Activated CD4-positive, alpha-beta T cell treated with anti-CD3 and anti-CD28 coated beads, Interleukin-2, amount 10 ng/mL, durations not matched to agents 7 days and 5 days (primary cell): ENCODE measurements at regions of chr11 and their contacts with region 1.

Region 1: DNA sequence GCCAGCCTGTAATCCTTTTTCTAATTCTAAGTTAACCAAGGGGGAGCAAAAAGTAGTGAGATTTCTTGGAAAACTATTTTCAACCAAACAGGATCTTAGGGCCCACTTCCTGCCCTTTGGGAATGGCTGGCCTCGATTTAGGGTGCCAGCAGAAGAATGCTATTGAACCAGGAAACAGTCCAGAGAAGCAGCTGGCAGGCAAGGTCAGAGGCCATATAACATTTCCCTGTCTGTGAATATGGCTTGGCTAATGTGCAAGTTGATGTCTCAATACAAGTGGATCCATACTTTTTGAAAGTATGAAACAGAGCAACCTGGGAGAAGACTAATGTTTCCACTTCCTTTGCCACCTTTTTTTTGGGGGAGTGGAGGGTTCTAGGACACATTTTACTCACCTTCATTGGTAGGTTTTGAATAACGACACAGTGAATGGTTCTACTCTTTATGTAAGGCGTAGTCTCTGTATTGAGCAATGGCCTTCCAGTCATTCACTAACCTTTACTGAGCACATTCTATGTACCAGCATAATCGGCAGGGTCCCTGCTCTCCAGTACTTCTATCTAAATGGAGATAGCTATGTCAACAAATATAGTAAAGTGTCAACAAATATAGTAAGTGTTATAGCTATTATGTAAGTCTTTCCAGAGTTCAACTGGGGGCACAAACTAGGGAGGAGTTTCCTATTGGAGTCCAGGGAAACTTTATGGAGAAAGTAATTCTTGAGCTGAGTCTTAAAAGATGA is 34.2 kb upstream of the RRM1 start:
- DNase-seq: no peak
- H3K4me3 Mint-ChIP-seq: no peak overlapping the region
- H3K27ac Mint-ChIP-seq: no peak overlapping the region
- H3K4me1 Mint-ChIP-seq: peaks cover 37% of the 10 kb centered on the region
- H3K27me3 Mint-ChIP-seq: no peaks in the 10 kb centered on the region

Region 2: DNA sequence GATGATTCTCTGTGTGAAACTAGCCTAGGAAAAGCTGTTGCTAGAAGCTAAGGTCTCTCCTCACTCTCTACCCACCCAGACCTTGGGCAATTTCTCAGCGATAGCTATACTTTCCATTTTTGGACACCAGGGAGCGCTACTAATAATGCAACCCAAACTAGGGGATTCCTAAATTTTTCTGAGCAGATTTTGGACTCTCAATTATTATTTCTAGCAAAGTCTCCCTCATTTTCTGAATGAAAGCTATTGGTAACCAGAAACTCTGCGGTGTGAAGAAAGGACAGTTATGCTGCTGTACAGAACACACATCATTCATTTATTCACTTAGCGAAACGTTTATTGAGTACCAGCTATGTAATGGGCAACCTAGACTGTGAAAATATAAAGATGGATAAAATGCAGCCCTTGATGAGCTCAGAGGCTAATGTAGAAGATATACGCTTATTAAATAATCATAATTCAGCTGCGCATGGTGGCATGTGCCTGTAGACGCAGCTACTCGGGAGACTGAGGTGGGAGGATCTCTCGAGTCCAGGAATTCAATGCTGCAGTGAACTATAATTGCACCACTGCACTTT is 211.0 kb before region 1 on chr11:
- CTCF ChIA-PET with region 1: interaction called, 214 read pairs
- POLR2A ChIA-PET with region 1: no interaction called
- DNase-seq: peak; percentile 65
- H3K4me3 Mint-ChIP-seq: no peak overlapping the region
- H3K27ac Mint-ChIP-seq: no peak overlapping the region
- H3K4me1 Mint-ChIP-seq: peaks cover 45% of the 10 kb centered on the region
- H3K27me3 Mint-ChIP-seq: peaks cover 5% of the 10 kb centered on the region